Heart left ventricle (tissue), 16 donors: ENCODE measurements at regions of chr5 and their contacts with region 1.

Region 1: GRCh38 chr5:58460732-58461286 is 923 bp upstream of the PLK2 start:
- DNase-seq: peak; percentile 91 to 95 (median 93)
- ATAC-seq: peak; percentile 81 to 86 (median 82)
- H3K4me3 ChIP-seq: peak overlapping the region; percentile 59 to 97 (median 85)
- H3K27ac ChIP-seq: peak overlapping the region; percentile 93 to 99 (median 98)
- H3K4me1 ChIP-seq: peaks cover 0 to 24% (median 9%) of the 10 kb centered on the region in 12 donors
- H3K27me3 ChIP-seq: no peaks in the 10 kb centered on the region
- CTCF ChIP-seq: peak; percentile 71 to 88 (median 82)
- POLR2A ChIP-seq: no peak

Region 2: GRCh38 chr5:57298295-57298984 is 1162.4 kb before region 1 on chr5:
- intact Hi-C with region 1: loop called (anchors 1 to 2 kb)
- DNase-seq: peak in 4 of 5 donors; percentile 78 to 86 (median 85)
- ATAC-seq: peak; percentile 82 to 95 (median 89)
- H3K4me3 ChIP-seq: peak overlapping the region in 8 of 12 donors; percentile 0 to 44 (median 26)
- H3K27ac ChIP-seq: peak overlapping the region in 5 of 12 donors; percentile 18 to 62 (median 37)
- H3K4me1 ChIP-seq: peaks cover 0 to 15% (median 8%) of the 10 kb centered on the region in 12 donors
- H3K27me3 ChIP-seq: no peaks in the 10 kb centered on the region
- CTCF ChIP-seq: peak; percentile 72 to 92 (median 82)
- POLR2A ChIP-seq: no peak

Region 3: DNA sequence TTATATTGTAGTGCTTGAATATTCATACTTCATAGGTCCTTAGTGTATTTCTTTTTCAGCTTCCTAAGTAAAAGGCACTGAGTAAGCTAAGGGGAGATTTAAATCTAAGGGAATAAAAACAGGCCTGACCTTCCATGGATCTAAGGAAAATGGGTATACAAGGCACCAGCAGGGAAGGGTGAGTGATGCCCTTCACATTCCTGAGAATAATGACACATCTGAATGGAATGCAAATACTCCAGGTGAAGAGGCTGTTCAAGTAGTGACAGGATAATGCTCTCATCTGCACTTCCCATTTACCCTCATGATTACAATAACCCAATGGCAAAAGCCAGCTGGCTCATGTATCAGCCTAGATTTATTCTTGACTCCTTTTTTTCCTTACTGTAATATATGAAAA is 762.0 kb before region 1 on chr5:
- intact Hi-C with region 1: loop called in 2 of 10 experiments (anchors 5 kb)
- DNase-seq: no peak
- ATAC-seq: no peak
- H3K4me3 ChIP-seq: no peak overlapping the region
- H3K27ac ChIP-seq: peak overlapping the region in 11 of 12 donors; percentile 19 to 88 (median 76)
- H3K4me1 ChIP-seq: peaks cover 2 to 55% (median 30%) of the 10 kb centered on the region in 12 donors
- H3K27me3 ChIP-seq: no peaks in the 10 kb centered on the region
- CTCF ChIP-seq: no peak
- POLR2A ChIP-seq: no peak

Region 4: GRCh38 chr5:58077416-58077815 is 383.4 kb before region 1 on chr5:
- intact Hi-C with region 1: loop called in 7 of 10 experiments (anchors 2 to 10 kb)
- DNase-seq: no peak
- ATAC-seq: no peak
- H3K4me3 ChIP-seq: no peak overlapping the region
- H3K27ac ChIP-seq: peak overlapping the region in 8 of 12 donors; percentile 1 to 82 (median 34)
- H3K4me1 ChIP-seq: peaks cover 6 to 64% (median 50%) of the 10 kb centered on the region in 12 donors
- H3K27me3 ChIP-seq: no peaks in the 10 kb centered on the region
- CTCF ChIP-seq: no peak
- POLR2A ChIP-seq: no peak

Region 5: DNA sequence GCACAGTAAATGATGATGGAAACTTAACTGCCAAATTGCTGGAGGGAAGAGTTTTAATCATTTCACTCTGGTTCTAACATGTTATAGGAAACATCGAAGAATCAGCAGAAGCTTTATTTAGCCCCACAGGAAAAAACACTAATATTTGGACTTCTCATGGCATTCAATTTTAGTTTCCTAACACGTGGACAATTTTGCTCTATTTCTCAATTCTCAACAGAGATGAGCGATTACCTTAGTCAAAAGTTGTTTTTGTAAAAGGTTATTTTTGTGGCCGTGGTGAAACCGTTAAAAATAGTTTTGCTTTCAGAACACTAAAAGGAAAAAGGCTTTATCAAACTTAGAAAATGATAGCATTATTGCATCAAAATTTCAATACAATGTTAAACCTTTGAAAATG is 236.1 kb before region 1 on chr5:
- intact Hi-C with region 1: loop called in 1 of 10 experiments (anchors 5 kb)
- DNase-seq: no peak
- ATAC-seq: no peak
- H3K4me3 ChIP-seq: peak overlapping the region in 1 of 12 donors; percentile 1
- H3K27ac ChIP-seq: peak overlapping the region in 3 of 12 donors; percentile 5 to 44 (median 21)
- H3K4me1 ChIP-seq: peaks cover 0 to 38% (median 8%) of the 10 kb centered on the region in 12 donors
- H3K27me3 ChIP-seq: no peaks in the 10 kb centered on the region
- CTCF ChIP-seq: no peak
- POLR2A ChIP-seq: no peak

Region 6: GRCh38 chr5:58259685-58260152 is 201.1 kb before region 1 on chr5:
- intact Hi-C with region 1: loop called in 3 of 10 experiments (anchors 5 to 10 kb)
- DNase-seq: no peak
- ATAC-seq: peak in 1 of 4 donors; percentile 40
- H3K4me3 ChIP-seq: peak overlapping the region in 2 of 12 donors; percentile 7
- H3K27ac ChIP-seq: peak overlapping the region in 3 of 12 donors; percentile 1 to 22 (median 8)
- H3K4me1 ChIP-seq: peaks cover 0 to 31% (median 15%) of the 10 kb centered on the region in 12 donors
- H3K27me3 ChIP-seq: no peaks in the 10 kb centered on the region
- CTCF ChIP-seq: no peak
- POLR2A ChIP-seq: no peak